Cardiac septum (tissue), 1 donor: ENCODE measurements at regions of chr1 and their contacts with region 1.

Region 1: GRCh38 chr1:40625066-40625465 is 40.4 kb downstream of the RIMS3 start:
- DNase-seq: peak; percentile 61

Region 2: GRCh38 chr1:40508375-40509341 is 116.4 kb before region 1 on chr1 and contains the start of gene EXO5:
- intact Hi-C with region 1: no loop called
- DNase-seq: peak; percentile 95
- total RNA-seq, gene EXO5: 4.7 TPM

Region 3: DNA sequence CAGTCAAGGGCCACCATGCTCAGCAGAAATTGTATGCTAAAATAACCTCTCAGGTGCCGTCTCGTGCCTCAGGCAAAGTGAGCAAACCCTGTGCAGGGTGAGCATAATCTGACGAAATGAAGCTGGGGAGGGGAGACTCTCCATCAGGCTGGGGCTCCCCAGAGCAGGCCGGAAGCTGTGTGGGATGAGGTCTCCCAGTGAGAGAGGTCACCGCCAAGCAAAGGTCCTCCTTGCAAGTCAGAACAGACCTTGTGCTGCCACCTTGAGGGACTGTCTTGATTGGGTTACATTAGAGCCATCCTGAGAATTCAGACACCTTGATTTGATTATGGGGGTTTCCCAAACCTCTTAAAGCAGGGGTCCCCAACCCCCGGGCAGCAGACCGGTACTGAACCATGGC is 29.4 kb before region 1 on chr1:
- intact Hi-C with region 1: no loop called
- DNase-seq: no peak

Region 4: GRCh38 chr1:40668769-40669525 is 43.9 kb after region 1 on chr1:
- intact Hi-C with region 1: loop called (anchors 5 kb)
- DNase-seq: peak; percentile 91

Region 5: GRCh38 chr1:40951943-40952743 is 327.1 kb after region 1 on chr1:
- intact Hi-C with region 1: loop called (anchors 10 kb)
- DNase-seq: peak; percentile 85

Region 6: DNA sequence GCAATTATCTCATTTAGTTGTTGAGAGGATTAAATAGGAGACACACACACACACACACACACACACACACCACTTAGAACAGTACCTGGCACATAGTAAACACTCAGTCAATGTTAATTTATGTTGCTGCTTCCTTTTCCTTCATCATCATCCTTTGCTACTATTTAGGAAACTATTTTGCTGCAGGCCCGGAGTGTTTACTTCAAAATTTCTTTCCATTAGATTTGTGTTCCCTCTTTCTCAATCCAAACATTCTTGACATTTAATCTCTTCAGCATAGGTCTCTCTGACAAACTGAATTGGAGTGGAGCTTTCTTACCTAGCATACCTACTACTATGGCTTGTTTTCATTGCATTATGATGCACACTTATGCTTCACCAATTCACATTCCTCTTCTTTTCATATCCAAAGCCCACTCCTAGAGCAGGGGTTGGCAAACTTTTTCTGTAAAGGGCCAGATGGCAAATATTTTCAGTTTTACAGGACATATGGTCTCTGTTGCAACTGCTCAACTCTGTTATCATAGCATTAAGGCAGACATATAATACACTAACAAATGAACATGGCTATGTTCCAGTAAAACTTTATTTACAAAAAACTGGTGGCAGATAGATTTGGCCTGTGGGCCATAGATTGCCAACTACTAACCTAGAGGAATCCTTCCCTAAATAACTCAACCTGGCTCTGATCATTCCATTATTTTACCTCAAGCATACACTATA is 567.6 kb after region 1 on chr1:
- intact Hi-C with region 1: no loop called
- DNase-seq: no peak